Ascending aorta (tissue), 2 donors: ENCODE measurements at regions of chr11 and their contacts with region 1.

Region 1: DNA sequence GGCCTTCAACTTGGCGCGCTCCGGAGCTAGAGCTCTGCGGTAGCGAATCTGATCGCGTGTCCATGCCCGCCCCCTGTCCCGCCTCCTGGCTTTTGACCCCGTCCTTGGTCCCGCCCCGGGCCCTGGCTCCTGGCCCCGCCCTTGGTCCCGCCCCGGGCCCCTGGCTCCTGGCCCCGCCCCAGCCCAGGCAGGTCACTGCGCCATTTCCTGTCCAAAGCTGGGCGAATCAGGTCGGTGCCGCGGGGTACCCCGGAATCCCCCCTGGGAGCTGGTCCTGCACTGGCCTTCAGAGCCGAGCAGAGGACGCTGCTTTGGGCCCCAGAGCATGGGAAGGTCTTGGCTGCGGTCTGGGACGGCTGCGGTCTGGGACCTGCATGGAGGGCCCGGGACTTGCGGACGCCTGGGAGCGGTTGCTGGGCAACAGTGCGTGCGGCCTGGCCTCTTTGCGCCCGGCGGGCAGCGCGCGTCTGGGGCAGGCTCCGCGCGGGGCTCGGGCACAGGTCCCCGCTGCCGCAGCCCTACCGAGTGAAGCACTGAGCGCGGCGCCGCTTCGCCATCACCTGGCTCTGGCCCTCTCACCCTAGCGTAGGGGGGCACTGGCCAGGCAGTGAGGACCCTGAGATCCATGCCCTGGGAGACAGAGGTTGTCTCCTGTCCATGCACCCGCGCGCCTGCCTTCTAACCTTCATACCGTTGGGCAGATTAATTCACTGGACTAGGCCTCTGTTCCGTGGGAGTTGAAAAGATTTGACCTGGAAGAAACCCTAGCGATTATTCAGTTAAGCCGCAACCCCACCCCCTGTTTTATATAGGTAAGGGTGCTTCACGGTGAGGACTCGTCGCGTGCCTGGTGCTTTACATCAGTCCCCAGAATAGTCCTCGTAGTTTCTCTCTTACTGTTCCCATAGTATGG is at the start of gene TTC12:
- DNase-seq: peak; percentile 65 to 95
- H3K4me3 ChIP-seq: peak within 1 kb of the TSS; percentile 66 to 72
- H3K27ac ChIP-seq: peak within 1 kb of the TSS; percentile 81 to 93
- H3K4me1 ChIP-seq: no peaks in the 10 kb centered on the region
- H3K27me3 ChIP-seq: no peaks in the 10 kb centered on the region
- CTCF ChIP-seq: no peak
- total RNA-seq, gene TTC12: 3.0 TPM

Region 2: GRCh38 chr11:112074026-112074811 is 1240.4 kb before region 1 on chr11 and contains the start of gene NKAPD1:
- intact Hi-C with region 1: loop called (anchors 10 kb)
- DNase-seq: peak; percentile 26 to 91
- H3K4me3 ChIP-seq: peak within 1 kb of the TSS; percentile 78 to 82
- H3K27ac ChIP-seq: peak within 1 kb of the TSS; percentile 87 to 92
- H3K4me1 ChIP-seq: peaks cover 0 to 6% of the 10 kb centered on the region in 2 donors
- H3K27me3 ChIP-seq: no peaks in the 10 kb centered on the region
- CTCF ChIP-seq: peak in 1 of 3 experiments; percentile 6
- total RNA-seq, gene NKAPD1: 12.2 TPM

Region 3: GRCh38 chr11:112226062-112226830 is 1088.4 kb before region 1 on chr11 and contains the start of gene PTS:
- intact Hi-C with region 1: loop called (anchors 5 kb)
- DNase-seq: peak; percentile 19 to 92
- H3K4me3 ChIP-seq: peak within 1 kb of the TSS; percentile 79 to 85
- H3K27ac ChIP-seq: peak within 1 kb of the TSS; percentile 93 to 97
- H3K4me1 ChIP-seq: peaks cover 0 to 10% of the 10 kb centered on the region in 2 donors
- H3K27me3 ChIP-seq: no peaks in the 10 kb centered on the region
- CTCF ChIP-seq: no peak
- total RNA-seq, gene PTS: 13.5 TPM

Region 4: DNA sequence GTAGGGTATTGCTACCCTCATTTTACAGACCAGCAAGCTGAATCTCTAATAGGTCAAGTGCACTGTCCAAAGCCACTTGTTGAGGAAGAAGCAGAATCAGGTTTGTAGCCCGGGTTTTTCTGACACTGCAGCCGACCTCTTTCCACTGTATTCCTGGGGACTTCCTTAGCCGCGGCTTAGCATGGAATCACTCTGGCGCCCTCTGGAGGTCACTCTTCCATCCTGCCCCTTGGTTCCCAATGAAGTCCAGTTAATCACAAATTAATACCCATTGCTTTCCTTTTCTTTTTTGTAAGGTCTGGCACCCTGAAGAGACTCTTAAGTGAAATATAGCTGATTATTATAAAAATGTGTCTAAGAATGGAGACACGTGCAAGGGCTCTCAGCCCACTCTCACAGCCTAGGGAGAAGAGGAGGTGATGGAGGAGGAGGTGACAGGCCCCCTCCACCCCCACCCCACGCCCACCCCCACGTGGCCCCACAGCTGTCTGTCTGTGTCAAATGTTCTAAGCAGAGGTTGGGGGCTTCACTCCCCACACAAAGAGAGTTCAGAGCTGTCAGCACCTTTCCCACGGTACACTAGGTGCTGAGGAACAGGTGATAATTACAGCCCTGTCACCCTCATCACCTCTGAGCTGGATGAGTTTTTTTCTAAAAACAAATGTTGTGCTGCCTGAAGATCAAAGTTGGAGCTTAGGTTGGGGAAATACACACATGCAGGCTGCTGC is 218.2 kb after region 1 on chr11:
- intact Hi-C with region 1: loop called (anchors 5 kb)
- DNase-seq: peak in 1 of 2 donors; percentile 81
- H3K4me3 ChIP-seq: no peak overlapping the region
- H3K27ac ChIP-seq: no peak overlapping the region
- H3K4me1 ChIP-seq: peaks cover 0 to 2% of the 10 kb centered on the region in 2 donors
- H3K27me3 ChIP-seq: no peaks in the 10 kb centered on the region
- CTCF ChIP-seq: peak; percentile 55 to 86 (median 81)

Region 5: GRCh38 chr11:113773416-113774173 is 458.9 kb after region 1 on chr11 and contains the start of gene ZW10:
- intact Hi-C with region 1: loop called (anchors 1 kb)
- DNase-seq: peak; percentile 82 to 98
- H3K4me3 ChIP-seq: peak within 1 kb of the TSS; percentile 89 to 96
- H3K27ac ChIP-seq: peak within 1 kb of the TSS; percentile 84 to 85
- H3K4me1 ChIP-seq: peaks cover 0 to 15% of the 10 kb centered on the region in 2 donors
- H3K27me3 ChIP-seq: no peaks in the 10 kb centered on the region
- CTCF ChIP-seq: peak; percentile 55 to 86 (median 82)
- total RNA-seq, gene ZW10: 12.3 TPM

Region 6: DNA sequence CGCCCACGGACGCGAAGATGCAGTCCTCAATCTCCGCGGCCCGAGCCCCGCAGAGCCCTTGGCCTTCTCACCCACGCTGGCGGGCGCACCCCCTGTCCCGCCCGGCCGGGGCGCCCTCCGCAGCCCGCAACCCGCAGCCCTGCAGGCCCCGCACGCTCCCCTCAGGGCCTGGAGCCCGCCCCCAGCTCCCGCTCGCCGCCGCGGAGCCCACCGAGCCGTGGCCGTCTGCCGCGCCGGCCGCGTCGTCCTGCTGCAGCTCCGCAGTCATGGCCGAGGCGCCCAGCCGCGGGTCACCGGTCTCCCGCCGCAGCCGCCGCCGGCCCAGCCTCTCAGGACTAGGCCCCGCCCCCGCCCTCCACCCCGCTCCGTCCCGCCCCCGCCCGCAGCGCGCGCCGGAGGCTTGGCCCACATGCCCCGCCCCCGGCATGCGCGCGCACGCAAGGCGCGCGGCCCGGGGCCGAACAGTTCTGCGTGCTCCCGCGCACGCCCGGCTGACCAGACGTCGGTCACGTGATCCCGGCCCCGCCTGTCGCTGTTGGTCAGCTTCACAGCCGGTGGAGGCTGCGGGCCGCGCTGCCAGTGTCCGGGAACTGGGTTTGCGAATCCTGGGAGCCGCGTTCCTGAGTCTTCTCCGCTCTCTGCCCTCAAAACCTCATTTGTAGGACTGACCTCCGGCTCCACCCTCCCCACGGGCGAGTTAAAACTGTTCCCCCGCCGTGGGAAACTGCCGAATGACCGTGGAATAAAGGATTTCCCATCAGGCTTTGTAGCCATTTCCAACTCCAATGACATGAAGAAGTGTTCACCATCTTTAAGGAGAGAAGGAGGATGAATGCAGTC is 560.8 kb after region 1 on chr11 and contains the start of gene USP28:
- intact Hi-C with region 1: loop called (anchors 5 kb)
- DNase-seq: peak; percentile 92 to 98
- H3K4me3 ChIP-seq: peak within 1 kb of the TSS; percentile 87 to 100
- H3K27ac ChIP-seq: peak within 1 kb of the TSS; percentile 90
- H3K4me1 ChIP-seq: peaks cover 0 to 18% of the 10 kb centered on the region in 2 donors
- H3K27me3 ChIP-seq: no peaks in the 10 kb centered on the region
- CTCF ChIP-seq: peak in 1 of 3 experiments; percentile 25
- total RNA-seq, gene USP28: 2.9 TPM